GM13976 (cell line): ENCODE measurements at regions of chr17 and their contacts with region 1.

Region 1: GRCh38 chr17:74923533-74924249 is 382 bp upstream of the OTOP2 start:
- DNase-seq: peak; percentile 93
- CTCF ChIP-seq: peak; percentile 93

Region 2: GRCh38 chr17:74631468-74632450 is 291.9 kb before region 1 on chr17:
- in situ Hi-C with region 1: no loop called
- DNase-seq: peak; percentile 60
- CTCF ChIP-seq: no peak

Region 3: GRCh38 chr17:74957935-74958723 is 34.4 kb after region 1 on chr17:
- in situ Hi-C with region 1: loop called (anchors 5 kb)
- DNase-seq: peak; percentile 89
- CTCF ChIP-seq: peak; percentile 87

Region 4: GRCh38 chr17:75679706-75680442 is 756.2 kb after region 1 on chr17:
- in situ Hi-C with region 1: no loop called
- DNase-seq: no peak
- CTCF ChIP-seq: no peak